ENCODE measurements at regions of chr12 and their contacts with region 1.

Region 1: DNA sequence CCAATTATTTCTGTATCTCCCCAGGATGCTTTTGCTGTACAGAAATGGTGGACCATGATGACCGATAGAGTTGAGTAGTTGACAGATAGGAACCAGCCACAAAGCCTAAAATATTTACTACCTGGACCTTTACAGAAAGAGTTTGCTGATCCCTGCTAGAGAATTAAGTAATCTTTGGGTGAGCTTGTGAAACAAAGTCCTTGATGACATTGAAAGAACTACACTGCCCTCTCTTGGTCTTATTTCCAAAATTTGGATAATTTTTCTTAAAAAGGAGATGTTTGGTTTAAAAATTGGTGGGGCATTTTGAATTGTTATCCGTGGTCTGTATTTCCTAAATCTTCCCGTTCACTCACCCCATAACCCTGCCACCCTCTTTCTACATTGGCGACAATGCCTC is 13.7 kb upstream of the TCTN1 start:
- DNase-seq: no peak
- ATAC-seq: no peak
- H3K4me3 Mint-ChIP-seq: no peak overlapping the region
- H3K27ac Mint-ChIP-seq: no peak overlapping the region
- H3K4me1 Mint-ChIP-seq: peaks cover 9% of the 10 kb centered on the region
- H3K27me3 Mint-ChIP-seq: no peaks in the 10 kb centered on the region

Region 2: GRCh38 chr12:110449799-110450497 is 150.3 kb before region 1 on chr12 and contains the start of gene ARPC3:
- CTCF ChIA-PET with region 1: interaction called, 161 read pairs
- DNase-seq: peak; percentile 98
- ATAC-seq: peak; percentile 98
- H3K4me3 Mint-ChIP-seq: peak within 1 kb of the TSS; percentile 95
- H3K27ac Mint-ChIP-seq: peak within 1 kb of the TSS; percentile 100
- H3K4me1 Mint-ChIP-seq: peaks cover 47% of the 10 kb centered on the region
- H3K27me3 Mint-ChIP-seq: no peaks in the 10 kb centered on the region
- total RNA-seq, gene ARPC3: 369 to 418 TPM

Region 3: DNA sequence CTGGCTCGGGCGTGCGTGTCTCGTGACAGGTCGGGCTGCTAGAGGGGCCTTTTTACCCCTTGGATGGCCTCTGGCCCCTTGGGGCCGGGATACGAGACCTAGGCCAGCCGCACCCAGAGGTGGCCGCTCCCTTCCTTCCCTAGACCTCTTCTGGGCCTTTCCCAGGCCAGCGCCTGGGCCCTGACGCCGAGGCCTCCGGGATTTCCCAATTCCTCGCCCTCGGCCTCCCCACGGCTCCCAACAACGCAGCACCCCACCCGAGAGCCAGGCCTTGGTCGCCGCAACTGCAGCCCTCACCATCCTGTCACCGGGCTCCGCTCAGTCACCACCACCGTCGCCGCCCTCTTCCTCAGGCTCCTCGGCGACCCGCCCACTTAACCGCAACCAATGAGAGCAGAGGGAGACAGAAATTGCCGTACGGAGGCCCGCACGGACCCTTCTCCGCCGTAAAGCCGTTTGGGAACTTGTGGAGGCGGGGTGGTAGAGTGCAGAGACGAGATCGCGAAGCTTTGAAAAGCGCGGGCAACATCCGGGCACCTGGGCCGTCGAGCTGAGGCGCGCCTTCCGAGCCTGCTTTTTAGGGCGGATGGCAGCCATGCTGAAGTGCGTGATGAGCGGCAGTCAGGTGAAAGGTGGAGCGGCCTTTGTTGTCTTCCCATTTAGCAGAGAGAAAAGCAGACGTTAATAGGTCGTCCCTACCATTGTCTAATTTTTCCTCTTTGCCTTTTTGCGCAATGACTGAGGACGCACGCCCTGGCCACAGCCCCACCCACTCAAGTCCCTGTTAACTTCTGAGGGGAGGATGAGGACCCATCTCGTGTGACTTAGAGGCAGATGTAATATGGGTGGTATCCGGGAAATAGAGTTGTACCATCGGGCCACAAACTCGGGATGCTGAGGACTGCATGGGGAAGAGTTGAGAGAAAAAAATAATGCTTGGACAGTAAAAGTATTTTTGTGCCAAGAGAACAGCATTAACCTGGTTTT is 98.2 kb before region 1 on chr12 and contains the starts of genes RAD9B and VPS29:
- CTCF ChIA-PET with region 1: interaction called, 21 read pairs
- DNase-seq: peak; percentile 100
- ATAC-seq: peak; percentile 95
- H3K4me3 Mint-ChIP-seq: peak within 1 kb of the TSS; percentile 99
- H3K27ac Mint-ChIP-seq: peak within 1 kb of the TSS; percentile 98
- H3K4me1 Mint-ChIP-seq: peaks cover 35% of the 10 kb centered on the region
- H3K27me3 Mint-ChIP-seq: no peaks in the 10 kb centered on the region
- total RNA-seq, gene RAD9B: 1.8 to 2.2 TPM
- total RNA-seq, gene VPS29: 126 to 132 TPM

Region 4: DNA sequence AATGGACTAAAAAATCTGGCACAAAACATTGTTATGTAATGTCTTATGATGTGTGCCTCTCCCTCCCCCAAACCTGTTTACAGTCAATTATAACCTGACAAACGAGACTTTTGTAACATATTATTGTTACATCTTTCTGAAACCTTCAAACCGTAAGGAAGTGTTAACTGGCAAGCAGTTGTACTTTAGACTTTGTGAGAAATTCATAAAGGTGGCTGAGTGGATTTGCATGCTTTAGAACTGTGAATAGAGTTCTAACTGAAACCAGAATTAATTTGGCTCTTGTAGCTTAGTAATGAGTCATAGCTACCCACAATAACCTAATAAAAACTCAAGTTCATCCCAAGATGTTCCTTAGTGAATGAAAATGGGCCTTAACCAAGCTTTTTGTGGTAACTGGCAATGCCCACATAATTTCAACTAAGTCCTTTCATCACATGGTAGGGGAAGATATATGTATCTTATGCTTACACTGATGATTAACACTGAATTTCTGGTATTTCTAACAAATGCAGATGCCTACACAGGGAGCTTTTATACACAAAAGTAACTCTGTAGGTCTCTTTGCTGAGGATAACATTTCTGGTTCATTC is 68.4 kb before region 1 on chr12:
- CTCF ChIA-PET with region 1: interaction called, 12 read pairs
- DNase-seq: no peak
- ATAC-seq: peak; percentile 47
- H3K4me3 Mint-ChIP-seq: no peak overlapping the region
- H3K27ac Mint-ChIP-seq: peak overlapping the region; percentile 35
- H3K4me1 Mint-ChIP-seq: peaks cover 19% of the 10 kb centered on the region
- H3K27me3 Mint-ChIP-seq: no peaks in the 10 kb centered on the region

Region 5: DNA sequence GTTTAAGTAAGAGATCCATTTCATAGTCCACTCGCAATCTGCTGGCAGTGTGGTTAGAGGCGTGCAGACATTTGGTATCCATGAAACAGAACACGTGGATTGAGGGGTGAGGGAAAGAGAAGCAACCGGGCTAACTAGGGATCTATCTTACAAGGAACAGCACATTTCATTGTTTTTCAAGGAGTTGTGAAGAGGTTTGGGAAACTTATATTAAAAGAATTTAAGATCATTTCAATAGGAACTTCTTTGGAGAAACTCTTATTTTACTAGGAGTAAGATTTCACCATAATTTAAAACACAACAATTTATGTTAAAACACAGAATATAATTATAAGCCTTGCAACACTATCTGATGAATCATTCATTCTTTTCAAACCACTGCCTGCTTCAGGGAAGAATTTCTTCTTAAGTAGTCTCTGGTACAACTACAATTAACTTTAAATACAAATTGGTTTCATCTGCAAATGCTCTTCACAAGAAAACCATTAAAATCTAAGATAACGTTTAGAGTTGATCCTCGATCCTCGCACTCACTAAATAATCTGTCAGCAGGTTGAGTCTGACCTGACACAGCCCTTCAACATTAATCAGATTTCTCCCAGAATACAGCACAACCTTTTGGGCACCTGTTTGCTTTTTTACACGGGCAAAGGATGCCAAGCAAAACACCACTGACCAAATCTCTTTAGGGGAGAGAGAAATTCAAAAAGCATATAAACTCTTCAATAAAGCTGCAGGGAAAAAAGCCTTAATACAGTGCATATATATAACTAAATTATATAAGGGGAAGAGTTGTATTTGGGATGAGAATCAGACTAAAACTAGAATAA is 44.5 kb before region 1 on chr12:
- CTCF ChIA-PET with region 1: interaction called, 157 read pairs
- DNase-seq: no peak
- ATAC-seq: no peak
- H3K4me3 Mint-ChIP-seq: no peak overlapping the region
- H3K27ac Mint-ChIP-seq: no peak overlapping the region
- H3K4me1 Mint-ChIP-seq: peaks cover 15% of the 10 kb centered on the region
- H3K27me3 Mint-ChIP-seq: no peaks in the 10 kb centered on the region

Region 6: GRCh38 chr12:110577717-110578521 is 22.3 kb before region 1 on chr12:
- CTCF ChIA-PET with region 1: interaction called, 28 read pairs
- DNase-seq: peak; percentile 71
- ATAC-seq: peak; percentile 57
- H3K4me3 Mint-ChIP-seq: peak overlapping the region; percentile 66
- H3K27ac Mint-ChIP-seq: peak overlapping the region; percentile 98
- H3K4me1 Mint-ChIP-seq: peaks cover 66% of the 10 kb centered on the region
- H3K27me3 Mint-ChIP-seq: no peaks in the 10 kb centered on the region

Region 7: DNA sequence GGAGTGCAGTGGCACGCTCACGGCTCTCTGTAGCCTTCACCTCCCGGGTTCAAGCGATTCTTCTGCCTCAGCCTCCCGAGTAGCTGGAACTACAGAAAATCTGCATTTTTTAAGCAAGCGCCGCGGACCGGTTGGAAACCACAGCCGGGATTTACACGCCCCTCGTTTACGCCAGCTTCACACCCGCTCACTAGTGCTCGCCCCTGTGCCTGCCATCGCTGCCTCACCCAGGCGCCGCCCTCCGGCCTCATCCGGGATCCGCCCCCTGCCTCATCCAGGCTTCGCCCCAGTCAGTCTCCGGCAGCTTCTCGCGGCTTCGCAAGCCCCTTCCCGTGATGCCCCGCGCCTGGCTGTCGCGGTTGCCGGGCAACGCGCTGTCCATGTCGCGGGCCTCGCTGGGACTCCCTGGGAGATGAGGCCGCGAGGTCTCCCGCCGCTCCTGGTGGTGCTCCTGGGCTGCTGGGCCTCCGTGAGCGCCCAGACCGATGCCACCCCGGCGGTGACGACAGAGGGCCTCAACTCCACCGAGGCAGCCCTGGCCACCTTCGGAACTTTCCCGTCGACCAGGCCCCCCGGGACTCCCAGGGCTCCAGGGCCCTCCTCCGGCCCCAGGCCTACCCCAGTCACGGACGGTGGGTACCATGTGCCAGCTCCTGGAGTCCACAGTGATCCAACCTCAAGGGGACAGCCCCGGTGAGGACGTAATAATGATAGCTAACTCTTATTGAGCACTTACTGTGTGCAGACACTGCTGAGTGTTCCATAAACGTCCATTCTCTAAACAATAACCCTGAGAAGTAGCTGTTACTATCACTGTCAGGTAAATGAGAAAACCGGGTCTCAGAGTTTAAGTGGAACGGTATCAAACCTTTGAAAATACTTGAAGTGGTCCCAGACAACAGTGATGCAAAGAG is 13.8 kb after region 1 on chr12 and contains the start of gene TCTN1:
- CTCF ChIA-PET with region 1: interaction called, 22 read pairs
- DNase-seq: peak; percentile 99
- ATAC-seq: peak; percentile 100
- H3K4me3 Mint-ChIP-seq: peak within 1 kb of the TSS; percentile 84
- H3K27ac Mint-ChIP-seq: peak within 1 kb of the TSS; percentile 88
- H3K4me1 Mint-ChIP-seq: peaks cover 11% of the 10 kb centered on the region
- H3K27me3 Mint-ChIP-seq: no peaks in the 10 kb centered on the region
- total RNA-seq, gene TCTN1: 5.5 to 5.8 TPM

Region 8: GRCh38 chr12:110657747-110658146 is 57.5 kb after region 1 on chr12:
- CTCF ChIA-PET with region 1: no interaction called
- DNase-seq: no peak
- ATAC-seq: no peak
- H3K4me3 Mint-ChIP-seq: no peak overlapping the region
- H3K27ac Mint-ChIP-seq: no peak overlapping the region
- H3K4me1 Mint-ChIP-seq: peaks cover 21% of the 10 kb centered on the region
- H3K27me3 Mint-ChIP-seq: no peaks in the 10 kb centered on the region

Region 9: DNA sequence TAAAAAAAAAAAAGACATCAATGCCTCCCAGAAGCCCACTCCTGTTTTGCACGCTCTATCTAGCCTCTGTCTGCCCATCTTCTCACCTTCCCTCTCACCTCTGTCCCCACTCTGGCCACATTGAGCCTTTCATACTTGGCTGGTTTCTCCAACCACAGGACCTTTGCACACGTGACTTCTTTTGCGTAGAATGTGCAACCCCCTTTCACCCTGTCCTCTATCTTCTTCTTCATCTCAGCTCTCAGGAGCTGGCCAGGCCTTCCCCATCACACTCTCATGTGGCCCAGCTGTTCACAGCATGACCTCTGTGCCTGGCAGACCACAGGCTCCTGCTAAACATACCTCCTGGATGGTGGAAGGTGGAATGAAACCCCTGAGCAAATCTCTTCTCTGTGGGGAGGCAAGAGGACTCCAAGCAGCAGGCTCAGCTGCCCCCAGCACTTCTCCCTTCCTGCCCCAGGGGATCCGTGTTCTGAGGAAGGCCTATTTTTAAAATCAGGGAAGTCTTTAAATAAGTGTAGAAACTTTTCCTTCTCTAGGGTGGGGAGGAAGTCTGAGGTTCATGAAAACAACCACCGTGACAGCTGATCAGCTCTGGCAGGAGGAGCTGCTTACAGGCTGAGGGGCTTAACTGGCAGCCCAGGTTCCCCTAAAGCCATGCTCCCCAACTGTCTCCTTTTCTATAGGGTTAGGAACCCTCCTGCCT is 77.1 kb after region 1 on chr12:
- CTCF ChIA-PET with region 1: no interaction called
- DNase-seq: peak; percentile 47
- ATAC-seq: peak; percentile 68
- H3K4me3 Mint-ChIP-seq: peak overlapping the region; percentile 1
- H3K27ac Mint-ChIP-seq: peak overlapping the region; percentile 78
- H3K4me1 Mint-ChIP-seq: peaks cover 49% of the 10 kb centered on the region
- H3K27me3 Mint-ChIP-seq: no peaks in the 10 kb centered on the region